ENCODE measurements at regions of chr2 and their contacts with region 1.

Region 1: DNA sequence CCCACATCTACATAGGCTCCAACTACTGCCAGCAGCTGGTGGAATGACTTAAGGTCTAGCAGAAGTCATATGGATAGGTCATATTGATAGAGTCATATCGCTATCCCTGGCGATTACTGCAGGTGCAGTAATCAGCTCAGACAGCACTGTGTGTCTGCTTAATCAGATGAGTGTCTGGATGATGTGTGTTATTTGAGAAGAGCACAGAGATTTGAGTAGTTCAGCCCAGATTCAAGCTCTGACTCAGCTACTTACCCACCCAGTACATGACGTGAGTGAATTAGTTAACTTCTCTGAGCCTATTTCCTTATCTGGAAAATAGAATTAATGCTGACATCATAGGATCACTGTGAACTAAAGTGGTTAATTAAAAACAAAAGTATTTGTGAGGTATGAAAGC is 78.9 kb downstream of the EHD3 start:
- DNase-seq: no peak
- ATAC-seq: no peak
- H3K4me3 ChIP-seq: no peak overlapping the region
- H3K27ac ChIP-seq: no peak overlapping the region
- H3K4me1 ChIP-seq: peaks cover 0 to 3% (median 0%) of the 10 kb centered on the region in 12 donors
- H3K27me3 ChIP-seq: no peaks in the 10 kb centered on the region
- CTCF ChIP-seq: no peak
- POLR2A ChIP-seq: no peak

Region 2: GRCh38 chr2:31239593-31240177 is 73.2 kb before region 1 on chr2:
- intact Hi-C with region 1: loop called in 1 of 10 experiments (anchors 5 kb)
- DNase-seq: peak; percentile 75 to 89 (median 81)
- ATAC-seq: peak; percentile 90 to 93 (median 92)
- H3K4me3 ChIP-seq: peak overlapping the region in 2 of 12 donors; percentile 2 to 4
- H3K27ac ChIP-seq: peak overlapping the region; percentile 73 to 95 (median 90)
- H3K4me1 ChIP-seq: peaks cover 11 to 71% (median 55%) of the 10 kb centered on the region in 12 donors
- H3K27me3 ChIP-seq: no peaks in the 10 kb centered on the region
- CTCF ChIP-seq: no peak
- POLR2A ChIP-seq: peak in 1 of 2 donors; percentile 51

Region 3: DNA sequence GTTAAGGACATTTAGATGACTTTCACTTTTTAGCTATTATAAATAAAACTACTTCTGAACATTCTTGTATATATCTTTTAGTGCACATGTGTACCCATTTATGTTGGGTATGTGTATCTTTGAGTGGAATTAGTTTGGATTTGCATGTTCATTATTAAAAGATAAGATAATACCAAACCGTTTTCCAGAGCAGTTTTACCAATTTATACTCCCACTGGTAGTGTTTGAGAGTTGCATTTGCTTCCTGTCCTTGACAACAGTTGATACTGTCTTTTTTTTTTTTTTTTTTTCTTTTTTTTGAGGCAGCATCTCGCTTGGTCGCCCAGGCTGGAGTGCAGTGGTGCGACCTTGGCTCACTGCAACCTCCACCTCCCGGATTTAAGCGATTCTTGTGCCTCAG is 876.1 kb after region 1 on chr2:
- intact Hi-C with region 1: no loop called
- DNase-seq: no peak
- ATAC-seq: no peak
- H3K4me3 ChIP-seq: no peak overlapping the region
- H3K27ac ChIP-seq: no peak overlapping the region
- H3K4me1 ChIP-seq: peaks cover 0 to 4% (median 0%) of the 10 kb centered on the region in 12 donors
- H3K27me3 ChIP-seq: no peaks in the 10 kb centered on the region
- CTCF ChIP-seq: no peak
- POLR2A ChIP-seq: no peak

Measured in heart left ventricle (tissue), 16 donors.